ENCODE measurements at regions of chr2 and their contacts with region 1.

Region 1: GRCh38 chr2:60456115-60456770 is 97.2 kb downstream of the BCL11A start:
- DNase-seq: no peak
- H3K4me3 ChIP-seq: no peak overlapping the region
- H3K27ac ChIP-seq: no peak overlapping the region
- H3K4me1 ChIP-seq: no peaks in the 10 kb centered on the region
- H3K27me3 ChIP-seq: no peaks in the 10 kb centered on the region
- CTCF ChIP-seq: no peak

Region 2: DNA sequence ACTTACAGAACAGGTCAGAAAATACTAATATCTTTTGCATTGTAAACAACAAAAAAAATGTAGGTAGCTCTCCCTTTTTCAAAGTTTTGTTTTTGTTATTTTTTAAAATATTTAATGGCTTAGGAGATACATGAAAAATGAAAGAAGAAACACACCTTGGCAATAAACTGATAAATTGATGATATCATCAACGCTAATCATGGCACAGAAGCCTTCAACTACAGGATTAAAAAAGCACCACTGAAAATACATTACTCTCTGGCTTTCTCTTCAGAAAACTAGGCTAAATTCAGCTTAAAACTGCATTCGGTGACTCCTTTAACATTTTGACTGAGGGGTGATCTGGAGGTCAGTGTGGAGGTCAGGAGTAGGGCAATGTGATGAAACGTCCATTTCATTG is 1196.3 kb before region 1 on chr2:
- intact Hi-C with region 1: loop called (anchors 5 kb)
- DNase-seq: no peak
- H3K4me3 ChIP-seq: no peak overlapping the region
- H3K27ac ChIP-seq: no peak overlapping the region
- H3K4me1 ChIP-seq: no peaks in the 10 kb centered on the region
- H3K27me3 ChIP-seq: no peaks in the 10 kb centered on the region
- CTCF ChIP-seq: no peak

Region 3: GRCh38 chr2:60297296-60298005 is 158.8 kb before region 1 on chr2:
- intact Hi-C with region 1: no loop called
- DNase-seq: no peak
- H3K4me3 ChIP-seq: no peak overlapping the region
- H3K27ac ChIP-seq: no peak overlapping the region
- H3K4me1 ChIP-seq: no peaks in the 10 kb centered on the region
- H3K27me3 ChIP-seq: peaks cover 0 to 6% of the 10 kb centered on the region in 2 donors
- CTCF ChIP-seq: no peak

Measured in tibial artery (tissue), 4 donors.